ENCODE measurements at regions of chr15 and their contacts with region 1.

Region 1: GRCh38 chr15:94015324-94015723 is 216.0 kb upstream of the MCTP2 start:
- DNase-seq: no peak
- H3K4me3 ChIP-seq: no peak overlapping the region
- H3K27ac ChIP-seq: no peak overlapping the region
- H3K4me1 ChIP-seq: no peaks in the 10 kb centered on the region
- H3K27me3 ChIP-seq: no peaks in the 10 kb centered on the region
- CTCF ChIP-seq: no peak
- POLR2A ChIP-seq: no peak

Region 2: GRCh38 chr15:93505506-93505905 is 509.8 kb before region 1 on chr15:
- intact Hi-C with region 1: loop called (anchors 5 kb)
- DNase-seq: no peak
- H3K4me3 ChIP-seq: no peak overlapping the region
- H3K27ac ChIP-seq: no peak overlapping the region
- H3K4me1 ChIP-seq: no peaks in the 10 kb centered on the region
- H3K27me3 ChIP-seq: no peaks in the 10 kb centered on the region
- CTCF ChIP-seq: no peak
- POLR2A ChIP-seq: no peak

Region 3: GRCh38 chr15:94196531-94196930 is 181.2 kb after region 1 on chr15:
- intact Hi-C with region 1: no loop called
- DNase-seq: no peak
- H3K4me3 ChIP-seq: no peak overlapping the region
- H3K27ac ChIP-seq: no peak overlapping the region
- H3K4me1 ChIP-seq: no peaks in the 10 kb centered on the region
- H3K27me3 ChIP-seq: no peaks in the 10 kb centered on the region
- CTCF ChIP-seq: no peak
- POLR2A ChIP-seq: no peak

Measured in breast epithelium (tissue), 4 donors.